ENCODE measurements at regions of chr13 and their contacts with region 1.

Region 1: GRCh38 chr13:90867336-90867683 is 480.2 kb upstream of the MIR17HG start:
- ATAC-seq: peak; percentile 52 to 100 (median 88)
- H3K4me3 ChIP-seq: no peak overlapping the region
- H3K27ac ChIP-seq: no peak overlapping the region
- H3K4me1 ChIP-seq: no peaks in the 10 kb centered on the region

Region 2: DNA sequence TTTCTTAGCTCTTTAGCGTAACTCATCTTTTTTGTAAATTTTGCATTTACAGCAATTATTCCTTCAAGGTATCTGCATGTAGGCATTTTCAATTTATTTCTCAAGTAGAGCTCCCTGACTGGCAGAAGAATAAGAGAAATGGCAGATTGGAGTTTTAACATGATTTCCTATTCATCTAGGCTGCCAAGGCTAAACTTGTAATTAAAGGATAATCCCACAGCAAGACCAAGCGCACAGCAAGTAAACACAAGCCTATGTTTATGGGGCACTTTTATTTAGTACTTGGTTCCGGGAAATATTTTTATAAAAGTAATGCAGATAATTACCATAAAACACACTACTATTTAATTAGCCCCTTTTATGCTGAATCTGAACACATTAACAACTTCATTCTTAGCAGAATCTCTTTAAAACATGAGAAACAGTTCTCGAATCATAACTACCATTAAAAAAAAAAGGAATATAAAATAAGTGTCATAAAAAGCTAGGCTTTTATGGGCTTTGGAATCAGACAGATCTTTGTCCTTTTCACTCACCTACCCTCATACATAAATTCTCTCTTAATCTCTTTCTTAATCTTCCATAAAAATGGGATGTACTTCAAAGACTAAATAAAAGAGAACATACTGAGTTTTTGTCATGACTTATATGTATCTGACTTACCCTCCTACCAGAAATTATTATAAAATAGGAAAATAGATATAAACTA is 481.4 kb before region 1 on chr13:
- in situ Hi-C with region 1: no loop called
- ATAC-seq: no peak
- H3K4me3 ChIP-seq: no peak overlapping the region
- H3K27ac ChIP-seq: no peak overlapping the region
- H3K4me1 ChIP-seq: no peaks in the 10 kb centered on the region

Region 3: DNA sequence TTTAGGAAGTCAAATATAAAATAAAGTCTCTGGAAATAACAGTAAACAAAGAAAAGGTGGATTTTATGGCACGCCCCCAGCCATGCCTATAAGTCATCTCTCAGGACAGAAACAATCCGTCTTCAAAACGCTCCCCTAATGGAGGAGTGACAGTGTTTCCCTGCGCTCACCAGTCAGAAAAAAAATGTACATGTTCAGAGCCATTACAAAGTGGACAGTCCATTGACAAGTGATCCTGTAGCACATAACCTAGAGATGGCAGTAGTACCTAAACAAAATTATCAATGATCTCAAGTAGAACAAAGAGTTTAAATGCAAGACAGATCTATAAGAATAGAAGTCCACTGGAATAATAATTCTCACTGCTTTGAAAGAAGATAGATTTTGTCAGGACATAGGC is 411.5 kb before region 1 on chr13:
- in situ Hi-C with region 1: loop called in 1 of 9 experiments (anchors 25 kb)
- ATAC-seq: peak in 5 of 8 experiments; percentile 73 to 90 (median 88)
- H3K4me3 ChIP-seq: no peak overlapping the region
- H3K27ac ChIP-seq: no peak overlapping the region
- H3K4me1 ChIP-seq: peaks cover 3 to 16% of the 10 kb centered on the region in 2 donors

Region 4: DNA sequence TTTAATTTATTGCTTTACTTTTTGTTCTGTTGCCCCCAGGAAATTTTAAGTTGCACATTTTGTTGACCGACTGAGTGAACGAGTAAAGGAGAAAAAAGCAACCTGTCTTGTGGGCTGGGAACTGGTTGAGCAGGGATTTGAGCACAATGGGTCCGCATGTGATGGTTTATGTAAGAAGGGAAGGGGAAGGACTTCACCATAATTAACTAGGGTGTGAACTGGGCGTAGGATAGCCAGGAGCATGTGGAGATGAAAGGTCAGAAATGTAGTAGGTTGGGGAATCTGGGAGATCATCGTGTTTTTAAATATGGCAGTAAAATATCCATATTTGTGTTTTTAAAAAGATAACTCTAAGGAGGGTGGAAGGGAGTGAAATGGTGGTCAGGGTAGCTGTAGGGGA is 631.0 kb after region 1 on chr13:
- in situ Hi-C with region 1: no loop called
- ATAC-seq: no peak
- H3K4me3 ChIP-seq: no peak overlapping the region
- H3K27ac ChIP-seq: no peak overlapping the region
- H3K4me1 ChIP-seq: peaks cover 0 to 7% of the 10 kb centered on the region in 2 donors